ENCODE measurements at regions of chr17 and their contacts with region 1.

Region 1: DNA sequence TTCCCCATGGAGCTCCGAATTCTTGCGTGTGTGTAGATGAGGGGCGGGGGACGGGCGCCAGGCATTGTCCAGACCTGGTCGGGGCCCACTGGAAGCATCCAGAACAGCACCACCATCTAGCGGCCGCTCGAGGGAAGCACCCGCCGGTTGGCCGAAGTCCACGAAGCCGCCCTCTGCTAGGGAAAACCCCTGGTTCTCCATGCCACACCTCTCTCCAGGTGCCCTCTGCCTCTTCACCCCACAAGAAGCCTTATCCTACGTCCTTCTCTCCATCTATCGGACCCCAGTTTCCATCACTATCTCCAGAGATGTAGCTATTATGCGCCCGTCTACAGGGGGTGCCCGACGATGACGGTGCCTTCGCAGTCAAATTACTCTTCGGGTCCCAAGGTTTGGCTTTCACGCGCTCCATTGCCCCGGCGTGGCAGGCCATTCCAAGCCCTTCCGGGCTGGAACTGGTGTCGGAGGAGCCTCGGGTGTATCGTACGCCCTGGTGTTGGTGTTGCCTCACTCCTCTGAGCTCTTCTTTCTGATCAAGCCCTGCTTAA is 617 bp upstream of the SENP3 start:
- DNase-seq: peak; percentile 93
- H3K4me3 ChIP-seq: peak overlapping the region; percentile 72 to 79
- H3K27ac ChIP-seq: peak overlapping the region; percentile 92 to 98
- H3K4me1 ChIP-seq: peaks cover 32 to 48% of the 10 kb centered on the region in 2 donors
- H3K27me3 ChIP-seq: no peaks in the 10 kb centered on the region
- CTCF ChIP-seq: peak; percentile 88 to 97 (median 92)
- POLR2A ChIP-seq: no peak

Region 2: GRCh38 chr17:7280519-7281429 is 280.3 kb before region 1 on chr17:
- intact Hi-C with region 1: no loop called
- DNase-seq: peak; percentile 77 to 87
- H3K4me3 ChIP-seq: peak overlapping the region; percentile 34 to 42
- H3K27ac ChIP-seq: peak overlapping the region; percentile 75 to 90
- H3K4me1 ChIP-seq: peaks cover 0 to 16% of the 10 kb centered on the region in 2 donors
- H3K27me3 ChIP-seq: no peaks in the 10 kb centered on the region
- CTCF ChIP-seq: peak; percentile 94 to 98 (median 96)
- POLR2A ChIP-seq: no peak

Region 3: DNA sequence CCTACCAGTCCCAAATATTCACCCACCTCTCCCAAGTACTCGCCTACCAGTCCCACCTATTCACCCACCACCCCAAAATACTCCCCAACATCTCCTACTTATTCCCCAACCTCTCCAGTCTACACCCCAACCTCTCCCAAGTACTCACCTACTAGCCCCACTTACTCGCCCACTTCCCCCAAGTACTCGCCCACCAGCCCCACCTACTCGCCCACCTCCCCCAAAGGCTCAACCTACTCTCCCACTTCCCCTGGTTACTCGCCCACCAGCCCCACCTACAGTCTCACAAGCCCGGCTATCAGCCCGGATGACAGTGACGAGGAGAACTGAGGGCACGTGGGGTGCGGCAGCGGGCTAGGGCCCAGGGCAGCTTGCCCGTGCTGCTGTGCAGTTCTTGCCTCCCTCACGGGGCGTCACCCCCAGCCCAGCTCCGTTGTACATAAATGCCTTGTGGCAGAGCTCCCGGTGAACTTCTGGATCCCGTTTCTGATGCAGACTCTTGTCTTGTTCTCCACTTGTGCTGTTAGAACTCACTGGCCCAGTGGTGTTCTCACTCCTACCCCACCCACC is 47.2 kb before region 1 on chr17:
- intact Hi-C with region 1: loop called (anchors 2 kb)
- DNase-seq: peak in 1 of 2 donors; percentile 34
- H3K4me3 ChIP-seq: no peak overlapping the region
- H3K27ac ChIP-seq: peak overlapping the region; percentile 22 to 48
- H3K4me1 ChIP-seq: peaks cover 0 to 5% of the 10 kb centered on the region in 2 donors
- H3K27me3 ChIP-seq: no peaks in the 10 kb centered on the region
- CTCF ChIP-seq: no peak
- POLR2A ChIP-seq: no peak

Measured in uterus (tissue), 4 donors.